ENCODE measurements at regions of chr7 and their contacts with region 1.

Region 1: GRCh38 chr7:157702311-157703023 is 365.7 kb downstream of the DNAJB6 start:
- DNase-seq: peak; percentile 1
- H3K4me3 ChIP-seq: no peak overlapping the region
- H3K27ac ChIP-seq: no peak overlapping the region
- H3K4me1 ChIP-seq: no peaks in the 10 kb centered on the region
- H3K27me3 ChIP-seq: peaks cover 40% of the 10 kb centered on the region
- CTCF ChIP-seq: no peak
- EP300 ChIP-seq: no peak
- POLR2A ChIP-seq: no peak

Region 2: DNA sequence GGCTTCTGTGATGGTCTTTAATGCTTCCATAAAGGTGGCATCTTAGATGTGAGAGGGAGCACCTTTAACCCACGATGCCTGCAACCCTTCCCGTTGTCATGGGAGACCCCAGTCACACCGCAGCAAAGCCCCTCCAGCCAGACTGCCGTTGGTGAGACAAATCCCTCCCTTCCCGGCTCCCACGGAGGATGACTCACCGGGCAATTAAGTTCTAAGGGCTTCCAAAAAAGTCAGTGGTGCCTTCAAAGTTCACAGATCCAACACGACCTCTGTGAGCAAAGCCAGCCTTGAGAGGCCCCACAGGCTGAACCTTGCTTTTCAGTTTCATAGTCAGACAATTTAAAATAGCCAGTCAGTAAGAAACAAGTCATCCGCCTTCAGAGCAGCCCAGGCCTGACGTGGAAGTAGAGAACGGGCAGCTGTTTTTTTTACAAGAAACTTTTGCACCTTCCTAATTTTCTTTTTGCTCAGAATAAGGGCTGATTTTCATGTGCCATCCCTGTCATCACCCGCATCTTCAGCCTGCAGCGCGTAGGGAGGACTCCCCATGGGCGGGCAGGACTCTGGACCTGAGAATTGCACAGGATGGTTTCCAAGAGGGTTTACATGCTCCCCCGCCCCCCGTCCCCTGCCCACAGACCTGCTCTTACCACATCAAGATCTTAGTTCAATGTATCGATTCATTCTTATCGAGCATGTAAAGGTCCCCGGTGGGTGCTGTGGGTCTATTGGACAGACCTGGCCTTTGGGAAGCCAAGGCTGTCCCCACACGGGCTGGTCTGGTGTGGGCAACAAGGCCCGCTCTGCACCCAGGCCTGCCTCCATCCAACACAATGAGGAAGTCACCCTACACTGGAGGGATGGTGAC is 31.7 kb before region 1 on chr7:
- in situ Hi-C with region 1: no loop called
- intact Hi-C with region 1: loop called (anchors 1 kb)
- DNase-seq: peak; percentile 2
- H3K4me3 ChIP-seq: no peak overlapping the region
- H3K27ac ChIP-seq: no peak overlapping the region
- H3K4me1 ChIP-seq: no peaks in the 10 kb centered on the region
- H3K27me3 ChIP-seq: peaks cover 5% of the 10 kb centered on the region
- CTCF ChIP-seq: no peak
- EP300 ChIP-seq: no peak
- POLR2A ChIP-seq: no peak

Measured in transverse colon (tissue), 4 donors.